ENCODE measurements at regions of chr15 and their contacts with region 1.

Region 1: DNA sequence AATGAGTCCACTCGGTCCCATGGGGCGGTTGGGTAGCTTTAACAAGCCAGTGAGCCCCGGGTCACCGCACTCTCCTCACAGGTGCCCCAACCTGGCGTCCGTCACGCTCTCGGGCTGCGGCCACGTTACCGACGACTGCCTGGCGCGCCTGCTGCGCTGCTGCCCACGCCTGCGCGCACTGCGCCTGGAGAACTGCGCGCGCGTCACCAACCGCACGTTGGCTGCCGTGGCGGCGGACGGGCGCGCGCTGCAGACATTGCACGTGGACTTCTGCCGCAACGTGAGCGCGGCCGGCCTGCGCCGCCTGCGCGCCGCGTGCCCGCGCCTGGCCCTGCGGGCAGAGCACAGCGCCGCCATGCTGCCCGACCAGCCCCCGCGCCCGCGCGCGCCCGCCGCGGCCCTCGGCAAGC is 3.4 kb downstream of the FBXL22 start:
- DNase-seq: peak; percentile 77
- ATAC-seq: peak; percentile 80
- H3K4me3 ChIP-seq: peak overlapping the region; percentile 87
- H3K27ac ChIP-seq: peak overlapping the region; percentile 85
- H3K4me1 ChIP-seq: peaks cover 34% of the 10 kb centered on the region
- H3K27me3 ChIP-seq: no peaks in the 10 kb centered on the region
- CTCF ChIP-seq: no peak; a peak in 1 of 6 replicates
- EP300 ChIP-seq: no peak
- POLR2A ChIP-seq: peak; percentile 94
- RAD21 ChIP-seq: no peak

Region 2: GRCh38 chr15:63473999-63474809 is 126.4 kb before region 1 on chr15:
- CTCF ChIA-PET with region 1: interaction called, 272 read pairs
- POLR2A ChIA-PET with region 1: interaction called, 11 read pairs
- RAD21 ChIA-PET with region 1: interaction called, 106 read pairs
- SMC1A ChIA-PET with region 1: interaction called, 150 read pairs
- in situ Hi-C with region 1: no loop called
- intact Hi-C with region 1: no loop called
- DNase-seq: peak; percentile 97
- ATAC-seq: peak; percentile 80
- H3K4me3 ChIP-seq: peak overlapping the region; percentile 59
- H3K27ac ChIP-seq: peak overlapping the region; percentile 100
- H3K4me1 ChIP-seq: peaks cover 62% of the 10 kb centered on the region
- H3K27me3 ChIP-seq: no peaks in the 10 kb centered on the region
- CTCF ChIP-seq: no peak
- EP300 ChIP-seq: peak; percentile 52 to 74; a peak in 2 of 4 replicates
- POLR2A ChIP-seq: no peak; the same call in 1 of the 2 replicates
- RAD21 ChIP-seq: peak; percentile 40; the same call in 1 of the 2 replicates

Region 3: GRCh38 chr15:63497642-63498467 is 102.8 kb before region 1 on chr15:
- CTCF ChIA-PET with region 1: interaction called, 8 read pairs
- POLR2A ChIA-PET with region 1: interaction called, 66 read pairs
- RAD21 ChIA-PET with region 1: interaction called, 113 read pairs
- SMC1A ChIA-PET with region 1: interaction called, 13 read pairs
- in situ Hi-C with region 1: no loop called
- intact Hi-C with region 1: no loop called
- DNase-seq: no peak
- ATAC-seq: peak; percentile 73
- H3K4me3 ChIP-seq: peak overlapping the region; percentile 4; the same call in 1 of the 2 replicates
- H3K27ac ChIP-seq: peak overlapping the region; percentile 80
- H3K4me1 ChIP-seq: peaks cover 69% of the 10 kb centered on the region
- H3K27me3 ChIP-seq: no peaks in the 10 kb centered on the region
- CTCF ChIP-seq: no peak
- EP300 ChIP-seq: no peak
- POLR2A ChIP-seq: no peak
- RAD21 ChIP-seq: no peak

Region 4: DNA sequence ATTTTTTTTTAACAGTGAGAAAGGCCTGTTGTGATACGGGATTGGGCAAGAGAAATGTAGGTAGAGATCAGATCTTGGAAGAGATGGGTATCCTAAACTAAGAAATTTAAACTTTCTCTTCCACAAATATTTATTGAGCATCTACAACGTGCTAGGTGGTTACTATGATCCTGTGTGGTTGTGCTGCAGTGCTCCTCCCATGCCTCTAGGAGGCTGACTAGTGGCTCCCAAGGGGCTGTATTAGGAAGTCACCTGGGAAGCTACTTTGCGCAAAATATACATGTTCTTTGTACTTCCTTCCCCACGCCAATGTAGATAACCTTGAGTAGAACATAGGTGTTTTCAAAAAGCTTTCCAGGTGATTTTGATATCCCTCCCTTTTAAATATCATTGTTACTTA is 69.0 kb before region 1 on chr15:
- CTCF ChIA-PET with region 1: interaction called, 23 read pairs
- POLR2A ChIA-PET with region 1: interaction called, 5 read pairs
- RAD21 ChIA-PET with region 1: interaction called, 7 read pairs
- SMC1A ChIA-PET with region 1: interaction called, 10 read pairs
- in situ Hi-C with region 1: no loop called
- intact Hi-C with region 1: no loop called
- DNase-seq: no peak
- ATAC-seq: peak; percentile 10; the same call in 1 of the 3 replicates
- H3K4me3 ChIP-seq: no peak overlapping the region
- H3K27ac ChIP-seq: no peak overlapping the region
- H3K4me1 ChIP-seq: peaks cover 51% of the 10 kb centered on the region
- H3K27me3 ChIP-seq: no peaks in the 10 kb centered on the region
- CTCF ChIP-seq: peak in 2 of 3 experiments; percentile 21 to 39; a peak in 2 of 6 replicates
- EP300 ChIP-seq: no peak
- POLR2A ChIP-seq: no peak
- RAD21 ChIP-seq: no peak

Region 5: DNA sequence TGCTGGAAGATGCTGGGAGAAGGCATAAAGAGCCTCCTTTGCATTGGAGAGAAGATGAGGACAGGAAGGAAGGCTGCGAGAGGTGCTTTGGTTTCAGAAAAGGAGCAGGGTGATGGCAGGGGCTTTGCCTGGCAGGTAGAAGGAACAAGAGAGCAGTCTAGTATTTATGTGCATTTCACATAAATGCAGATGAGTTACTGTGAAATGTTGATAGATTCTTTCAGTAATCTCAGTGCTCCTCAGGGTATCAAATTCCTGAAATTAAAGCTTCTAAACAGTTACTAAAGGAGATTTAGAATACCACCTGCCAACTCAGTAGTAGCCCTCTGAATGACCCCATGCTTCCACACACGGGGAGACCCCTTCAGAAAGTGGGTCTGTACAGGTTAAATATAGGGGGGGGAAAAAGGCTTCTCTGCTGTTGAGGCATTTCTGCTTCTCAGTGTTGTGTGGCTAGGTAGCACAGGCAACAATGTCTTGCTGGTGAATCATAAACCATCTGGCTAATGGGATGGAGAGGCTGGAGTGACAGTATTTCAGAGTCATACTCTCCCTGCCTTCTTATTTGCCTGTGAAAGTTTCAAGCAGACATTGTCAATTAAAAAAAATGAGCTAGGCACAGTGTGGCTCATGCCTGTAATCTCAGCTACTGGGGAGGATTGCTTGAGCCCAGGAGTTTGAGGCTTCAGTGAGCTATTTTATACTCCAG is 17.7 kb before region 1 on chr15:
- CTCF ChIA-PET with region 1: interaction called, 5 read pairs
- POLR2A ChIA-PET with region 1: interaction called, 4 read pairs
- RAD21 ChIA-PET with region 1: interaction called, 3 read pairs
- SMC1A ChIA-PET with region 1: interaction called, 13 read pairs
- in situ Hi-C with region 1: no loop called
- intact Hi-C with region 1: no loop called
- DNase-seq: no peak
- ATAC-seq: no peak; the same call in 2 of the 3 replicates
- H3K4me3 ChIP-seq: no peak overlapping the region
- H3K27ac ChIP-seq: no peak overlapping the region
- H3K4me1 ChIP-seq: no peaks in the 10 kb centered on the region
- H3K27me3 ChIP-seq: no peaks in the 10 kb centered on the region
- CTCF ChIP-seq: no peak
- EP300 ChIP-seq: no peak
- POLR2A ChIP-seq: no peak
- RAD21 ChIP-seq: no peak